Naive thymus-derived CD4-positive, alpha-beta T cell (primary cell): ENCODE measurements at regions of chr6 and their contacts with region 1.

Region 1: GRCh38 chr6:37691904-37692806 is 5.5 kb downstream of the MDGA1 start:
- DNase-seq: peak; percentile 46 to 87 (median 72)
- ATAC-seq: peak; percentile 89
- H3K4me3 ChIP-seq: no peak overlapping the region
- H3K4me3 Mint-ChIP-seq: peak overlapping the region in 1 of 10 donors; percentile 45
- H3K27ac ChIP-seq: no peak overlapping the region
- H3K27ac Mint-ChIP-seq: no peak overlapping the region
- H3K4me1 ChIP-seq: peaks cover 11 to 12% of the 10 kb centered on the region in 2 donors
- H3K4me1 Mint-ChIP-seq: peaks cover 9 to 26% (median 21%) of the 10 kb centered on the region in 7 donors
- H3K27me3 ChIP-seq: peaks cover 0 to 4% of the 10 kb centered on the region in 2 donors
- H3K27me3 Mint-ChIP-seq: peaks cover 26 to 45% (median 34%) of the 10 kb centered on the region in 5 donors

Region 2: GRCh38 chr6:37222125-37222967 is 469.8 kb before region 1 on chr6:
- CTCF ChIA-PET with region 1: no interaction called
- POLR2A ChIA-PET with region 1: no interaction called
- intact Hi-C with region 1: loop called in 1 of 2 experiments (anchors 1 kb)
- DNase-seq: peak; percentile 45 to 74 (median 66)
- ATAC-seq: peak; percentile 94
- H3K4me3 ChIP-seq: peak overlapping the region; percentile 60
- H3K4me3 Mint-ChIP-seq: peak overlapping the region; percentile 77 to 91 (median 86)
- H3K27ac ChIP-seq: peak overlapping the region; percentile 47
- H3K27ac Mint-ChIP-seq: peak overlapping the region in 7 of 9 donors; percentile 13 to 76 (median 68)
- H3K4me1 ChIP-seq: peaks cover 4% of the 10 kb centered on the region in 2 donors
- H3K4me1 Mint-ChIP-seq: peaks cover 12 to 38% (median 13%) of the 10 kb centered on the region in 7 donors
- H3K27me3 ChIP-seq: no peaks in the 10 kb centered on the region
- H3K27me3 Mint-ChIP-seq: no peaks in the 10 kb centered on the region

Region 3: GRCh38 chr6:37353761-37354525 is 338.2 kb before region 1 on chr6 and contains the start of gene RNF8:
- CTCF ChIA-PET with region 1: interaction called, 3 read pairs
- POLR2A ChIA-PET with region 1: no interaction called
- intact Hi-C with region 1: loop called in 1 of 2 experiments (anchors 10 kb)
- DNase-seq: peak; percentile 72 to 92 (median 84)
- ATAC-seq: peak; percentile 96
- H3K4me3 ChIP-seq: peak within 1 kb of the TSS; percentile 94
- H3K4me3 Mint-ChIP-seq: peak within 1 kb of the TSS; percentile 90 to 98 (median 95)
- H3K27ac ChIP-seq: peak within 1 kb of the TSS; percentile 79
- H3K27ac Mint-ChIP-seq: peak within 1 kb of the TSS; percentile 81 to 93 (median 88)
- H3K4me1 ChIP-seq: peaks cover 7 to 14% of the 10 kb centered on the region in 2 donors
- H3K4me1 Mint-ChIP-seq: peaks cover 21 to 49% (median 37%) of the 10 kb centered on the region in 7 donors
- H3K27me3 ChIP-seq: no peaks in the 10 kb centered on the region
- H3K27me3 Mint-ChIP-seq: no peaks in the 10 kb centered on the region
- total RNA-seq, gene RNF8: 7.1 to 26.0 (median 15.8) TPM

Region 4: GRCh38 chr6:37381579-37381978 is 310.6 kb before region 1 on chr6:
- CTCF ChIA-PET with region 1: interaction called, 8 read pairs
- POLR2A ChIA-PET with region 1: no interaction called
- intact Hi-C with region 1: loop called (anchors 1 to 2 kb)
- DNase-seq: peak in 7 of 9 donors; percentile 18 to 48 (median 35)
- ATAC-seq: peak; percentile 61
- H3K4me3 ChIP-seq: no peak overlapping the region
- H3K4me3 Mint-ChIP-seq: no peak overlapping the region
- H3K27ac ChIP-seq: no peak overlapping the region
- H3K27ac Mint-ChIP-seq: peak overlapping the region in 1 of 9 donors; percentile 19
- H3K4me1 ChIP-seq: no peaks in the 10 kb centered on the region
- H3K4me1 Mint-ChIP-seq: peaks cover 0 to 3% (median 0%) of the 10 kb centered on the region in 7 donors
- H3K27me3 ChIP-seq: no peaks in the 10 kb centered on the region
- H3K27me3 Mint-ChIP-seq: no peaks in the 10 kb centered on the region

Region 5: GRCh38 chr6:37566111-37566949 is 125.8 kb before region 1 on chr6:
- CTCF ChIA-PET with region 1: interaction called, 9 read pairs
- POLR2A ChIA-PET with region 1: no interaction called
- intact Hi-C with region 1: loop called (anchors 1 to 5 kb)
- DNase-seq: peak; percentile 45 to 86 (median 70)
- ATAC-seq: peak; percentile 93
- H3K4me3 ChIP-seq: peak overlapping the region; percentile 52
- H3K4me3 Mint-ChIP-seq: peak overlapping the region in 9 of 10 donors; percentile 37 to 80 (median 63)
- H3K27ac ChIP-seq: no peak overlapping the region
- H3K27ac Mint-ChIP-seq: peak overlapping the region in 2 of 9 donors; percentile 8 to 12
- H3K4me1 ChIP-seq: peaks cover 0 to 4% of the 10 kb centered on the region in 2 donors
- H3K4me1 Mint-ChIP-seq: peaks cover 6 to 21% (median 12%) of the 10 kb centered on the region in 7 donors
- H3K27me3 ChIP-seq: no peaks in the 10 kb centered on the region
- H3K27me3 Mint-ChIP-seq: peaks cover 3 to 28% (median 11%) of the 10 kb centered on the region in 5 donors

Region 6: GRCh38 chr6:37607944-37608343 is 84.2 kb before region 1 on chr6:
- CTCF ChIA-PET with region 1: interaction called, 7 read pairs
- POLR2A ChIA-PET with region 1: no interaction called
- intact Hi-C with region 1: loop called in 1 of 2 experiments (anchors 1 kb)
- DNase-seq: no peak
- ATAC-seq: no peak
- H3K4me3 ChIP-seq: no peak overlapping the region
- H3K4me3 Mint-ChIP-seq: no peak overlapping the region
- H3K27ac ChIP-seq: no peak overlapping the region
- H3K27ac Mint-ChIP-seq: no peak overlapping the region
- H3K4me1 ChIP-seq: no peaks in the 10 kb centered on the region
- H3K4me1 Mint-ChIP-seq: peaks cover 0 to 5% (median 0%) of the 10 kb centered on the region in 7 donors
- H3K27me3 ChIP-seq: no peaks in the 10 kb centered on the region
- H3K27me3 Mint-ChIP-seq: peaks cover 0 to 47% (median 0%) of the 10 kb centered on the region in 5 donors